CD8-positive, alpha-beta T cell (primary cell): ENCODE measurements at regions of chr5 and their contacts with region 1.

Region 1: GRCh38 chr5:24786108-24786507 is 141.3 kb upstream of the CDH10 start:
- DNase-seq: no peak
- ATAC-seq: no peak
- H3K4me3 ChIP-seq: no peak overlapping the region
- H3K4me3 Mint-ChIP-seq: no peak overlapping the region
- H3K27ac ChIP-seq: no peak overlapping the region
- H3K27ac Mint-ChIP-seq: no peak overlapping the region
- H3K4me1 ChIP-seq: no peaks in the 10 kb centered on the region
- H3K4me1 Mint-ChIP-seq: no peaks in the 10 kb centered on the region
- H3K27me3 ChIP-seq: no peaks in the 10 kb centered on the region
- H3K27me3 Mint-ChIP-seq: no peaks in the 10 kb centered on the region
- CTCF ChIP-seq: no peak

Region 2: GRCh38 chr5:24720743-24721142 is 65.4 kb before region 1 on chr5:
- CTCF ChIA-PET with region 1: no interaction called
- POLR2A ChIA-PET with region 1: no interaction called
- intact Hi-C with region 1: no loop called
- DNase-seq: no peak
- ATAC-seq: no peak
- H3K4me3 ChIP-seq: no peak overlapping the region
- H3K4me3 Mint-ChIP-seq: no peak overlapping the region
- H3K27ac ChIP-seq: no peak overlapping the region
- H3K27ac Mint-ChIP-seq: no peak overlapping the region
- H3K4me1 ChIP-seq: no peaks in the 10 kb centered on the region
- H3K4me1 Mint-ChIP-seq: no peaks in the 10 kb centered on the region
- H3K27me3 ChIP-seq: no peaks in the 10 kb centered on the region
- H3K27me3 Mint-ChIP-seq: no peaks in the 10 kb centered on the region
- CTCF ChIP-seq: no peak

Region 3: DNA sequence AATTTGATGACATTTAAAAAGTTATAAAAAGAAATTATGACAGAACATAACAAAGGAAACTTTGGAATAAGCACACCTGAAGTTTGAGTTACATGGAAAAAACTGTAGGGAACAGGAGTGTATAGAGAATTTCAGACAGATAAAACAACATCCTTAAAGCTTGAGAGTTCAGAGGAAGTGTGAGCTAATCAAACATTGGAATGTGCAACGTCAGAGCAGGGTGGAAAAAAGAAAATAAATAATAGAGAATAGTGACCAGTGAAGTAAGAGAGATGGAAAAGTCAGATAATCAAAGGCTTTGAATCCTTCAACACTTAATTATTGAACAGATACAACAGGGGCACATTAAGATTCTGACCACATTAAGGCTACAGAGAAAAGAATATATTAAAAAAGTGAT is 12.9 kb before region 1 on chr5:
- CTCF ChIA-PET with region 1: no interaction called
- POLR2A ChIA-PET with region 1: no interaction called
- intact Hi-C with region 1: loop called (anchors 1 kb)
- DNase-seq: no peak
- ATAC-seq: no peak
- H3K4me3 ChIP-seq: no peak overlapping the region
- H3K4me3 Mint-ChIP-seq: no peak overlapping the region
- H3K27ac ChIP-seq: no peak overlapping the region
- H3K27ac Mint-ChIP-seq: no peak overlapping the region
- H3K4me1 ChIP-seq: no peaks in the 10 kb centered on the region
- H3K4me1 Mint-ChIP-seq: no peaks in the 10 kb centered on the region
- H3K27me3 ChIP-seq: no peaks in the 10 kb centered on the region
- H3K27me3 Mint-ChIP-seq: no peaks in the 10 kb centered on the region
- CTCF ChIP-seq: no peak